Activated B cell treated with CpG ODN at 0.5 μM for 24 hours (primary cell): ENCODE measurements at regions of chr1 and their contacts with region 1.

Region 1: GRCh38 chr1:101025657-101026504 is at the start of gene DPH5:
- DNase-seq: peak; percentile 77
- ATAC-seq: peak; percentile 95
- H3K4me3 Mint-ChIP-seq: peak within 1 kb of the TSS; percentile 97
- H3K27ac Mint-ChIP-seq: peak within 1 kb of the TSS; percentile 98
- H3K4me1 Mint-ChIP-seq: peaks cover 66% of the 10 kb centered on the region
- H3K27me3 Mint-ChIP-seq: no peaks in the 10 kb centered on the region
- CTCF ChIP-seq: no peak
- total RNA-seq, gene DPH5: 45.2 and 51.9 TPM in 2 replicates

Region 2: DNA sequence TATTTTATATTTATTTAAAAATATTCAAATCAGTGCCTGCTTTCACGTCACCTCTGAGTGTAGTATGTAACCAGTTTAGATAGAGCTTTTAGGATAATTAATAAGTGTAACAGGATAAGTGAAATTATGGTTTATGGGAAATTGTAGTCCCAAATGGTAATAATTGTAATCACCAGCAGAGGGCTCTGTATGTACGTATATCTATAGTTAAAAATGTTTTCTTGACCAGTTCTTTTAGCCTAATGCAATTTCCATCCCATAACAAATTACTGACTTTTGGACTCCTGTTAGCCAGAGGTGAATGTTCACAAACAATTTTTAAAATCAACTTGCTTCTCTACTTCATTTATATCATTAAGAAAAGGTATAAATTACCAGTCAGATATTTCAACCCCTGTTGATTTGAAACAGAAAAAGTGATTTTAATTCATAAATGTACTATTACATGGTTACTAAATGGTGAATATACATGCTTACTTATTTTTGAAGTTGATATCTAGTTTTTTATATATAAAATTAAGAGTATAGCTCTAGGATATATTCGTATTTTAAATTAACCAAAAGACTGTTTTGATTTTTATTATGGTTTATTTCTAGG is 104.7 kb before region 1 on chr1:
- CTCF ChIA-PET with region 1: no interaction called
- POLR2A ChIA-PET with region 1: no interaction called
- intact Hi-C with region 1: loop called (anchors 5 kb)
- DNase-seq: no peak
- ATAC-seq: no peak
- H3K4me3 Mint-ChIP-seq: no peak overlapping the region
- H3K27ac Mint-ChIP-seq: no peak overlapping the region
- H3K4me1 Mint-ChIP-seq: peaks cover 24% of the 10 kb centered on the region
- H3K27me3 Mint-ChIP-seq: no peaks in the 10 kb centered on the region
- CTCF ChIP-seq: peak; percentile 98

Region 3: GRCh38 chr1:101039245-101039644 is 13.4 kb after region 1 on chr1:
- CTCF ChIA-PET with region 1: no interaction called
- POLR2A ChIA-PET with region 1: interaction called, 4 read pairs
- intact Hi-C with region 1: loop called (anchors 1 kb)
- DNase-seq: no peak
- ATAC-seq: no peak
- H3K4me3 Mint-ChIP-seq: no peak overlapping the region
- H3K27ac Mint-ChIP-seq: peak overlapping the region; percentile 64
- H3K4me1 Mint-ChIP-seq: peaks cover 56% of the 10 kb centered on the region
- H3K27me3 Mint-ChIP-seq: no peaks in the 10 kb centered on the region
- CTCF ChIP-seq: no peak

Region 4: DNA sequence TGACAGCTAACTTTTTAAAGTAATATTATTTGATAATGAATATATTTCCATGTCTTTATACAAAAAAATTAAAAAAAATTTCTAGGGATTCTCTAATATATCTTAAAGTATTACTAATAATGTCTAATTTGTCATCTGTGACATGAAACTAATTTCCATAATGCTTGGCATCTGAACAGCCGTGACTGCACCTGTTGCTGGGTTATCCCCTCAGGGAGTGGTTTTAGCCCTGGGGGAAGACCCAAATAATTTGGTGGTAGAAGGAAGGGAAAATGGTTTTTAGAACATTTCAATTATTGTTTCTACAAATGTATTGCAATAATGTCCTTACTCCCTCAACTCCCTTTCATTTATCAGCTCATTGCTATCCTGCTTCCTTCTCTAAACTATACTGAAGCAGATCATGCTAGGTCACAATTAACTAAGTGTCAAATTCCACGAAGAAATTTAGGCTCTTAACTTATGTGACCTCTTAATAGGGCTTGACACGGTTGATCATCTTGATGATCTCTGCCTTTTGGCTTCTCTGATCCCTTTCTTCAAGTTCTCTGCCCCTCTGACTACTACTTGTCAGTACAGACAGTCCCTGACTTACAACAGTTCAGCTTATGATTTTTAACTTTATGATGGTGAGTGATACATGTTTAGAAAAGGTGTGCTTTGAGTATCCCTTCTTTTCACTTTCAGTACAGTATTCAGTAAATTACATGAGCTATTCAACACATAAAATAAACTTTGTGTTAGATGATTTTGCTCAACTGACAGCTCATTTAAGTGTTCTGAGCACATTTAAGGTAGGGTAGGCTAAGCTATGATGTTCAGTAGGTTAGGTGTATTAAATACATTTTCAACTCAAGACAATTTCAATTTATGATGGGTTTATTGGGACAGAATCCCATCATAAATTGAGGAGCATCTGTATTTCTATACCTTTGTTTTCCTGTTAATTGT is 26.1 kb after region 1 on chr1:
- CTCF ChIA-PET with region 1: interaction called, 3 read pairs
- POLR2A ChIA-PET with region 1: interaction called, 20 read pairs
- intact Hi-C with region 1: loop called (anchors 1 kb)
- DNase-seq: peak; percentile 27
- ATAC-seq: peak; percentile 88
- H3K4me3 Mint-ChIP-seq: peak overlapping the region; percentile 78
- H3K27ac Mint-ChIP-seq: peak overlapping the region; percentile 95
- H3K4me1 Mint-ChIP-seq: peaks cover 70% of the 10 kb centered on the region
- H3K27me3 Mint-ChIP-seq: no peaks in the 10 kb centered on the region
- CTCF ChIP-seq: no peak

Region 5: DNA sequence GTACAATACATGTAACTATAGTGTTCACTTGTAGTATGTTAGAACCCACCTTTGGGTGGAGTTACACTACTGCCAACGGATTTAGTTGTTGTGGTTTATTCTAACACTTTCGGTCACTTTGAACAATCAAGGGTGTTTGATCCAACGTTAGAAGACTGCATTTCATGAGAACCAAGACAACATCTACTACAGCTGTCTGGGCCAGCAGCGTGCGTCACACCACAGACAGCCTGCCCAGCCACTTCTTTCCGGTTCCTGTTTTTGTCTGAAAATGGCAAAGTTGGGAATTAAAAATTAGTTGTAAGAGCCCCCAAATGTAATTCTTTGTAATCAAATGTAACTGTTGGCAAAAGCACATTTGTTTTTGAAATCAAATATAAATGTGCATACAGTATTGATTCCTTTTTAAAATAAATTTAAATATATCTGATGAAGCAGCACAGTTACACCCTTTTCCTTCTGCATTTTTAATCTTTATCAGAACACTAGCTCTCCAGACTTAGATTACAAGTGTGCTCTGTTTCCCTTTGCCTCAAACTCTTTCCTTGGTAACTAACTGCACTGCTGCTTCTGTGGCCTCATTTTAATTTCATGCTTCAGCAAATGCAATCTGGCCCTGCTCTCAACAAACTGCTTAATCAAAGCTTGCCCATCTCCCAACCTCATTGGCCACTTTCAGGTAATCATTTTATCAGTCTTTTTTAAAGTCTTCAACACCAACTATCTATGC is 86.3 kb after region 1 on chr1:
- CTCF ChIA-PET with region 1: no interaction called
- POLR2A ChIA-PET with region 1: interaction called, 5 read pairs
- intact Hi-C with region 1: loop called (anchors 5 kb)
- DNase-seq: peak; percentile 32
- ATAC-seq: peak; percentile 96
- H3K4me3 Mint-ChIP-seq: peak overlapping the region; percentile 57
- H3K27ac Mint-ChIP-seq: peak overlapping the region; percentile 93
- H3K4me1 Mint-ChIP-seq: peaks cover 40% of the 10 kb centered on the region
- H3K27me3 Mint-ChIP-seq: no peaks in the 10 kb centered on the region
- CTCF ChIP-seq: no peak

Region 6: GRCh38 chr1:101128211-101128727 is 102.4 kb after region 1 on chr1:
- CTCF ChIA-PET with region 1: no interaction called
- POLR2A ChIA-PET with region 1: no interaction called
- intact Hi-C with region 1: loop called (anchors 2 kb)
- DNase-seq: no peak
- ATAC-seq: peak; percentile 95
- H3K4me3 Mint-ChIP-seq: peak overlapping the region; percentile 55
- H3K27ac Mint-ChIP-seq: peak overlapping the region; percentile 87
- H3K4me1 Mint-ChIP-seq: peaks cover 62% of the 10 kb centered on the region
- H3K27me3 Mint-ChIP-seq: no peaks in the 10 kb centered on the region
- CTCF ChIP-seq: no peak

Region 7: DNA sequence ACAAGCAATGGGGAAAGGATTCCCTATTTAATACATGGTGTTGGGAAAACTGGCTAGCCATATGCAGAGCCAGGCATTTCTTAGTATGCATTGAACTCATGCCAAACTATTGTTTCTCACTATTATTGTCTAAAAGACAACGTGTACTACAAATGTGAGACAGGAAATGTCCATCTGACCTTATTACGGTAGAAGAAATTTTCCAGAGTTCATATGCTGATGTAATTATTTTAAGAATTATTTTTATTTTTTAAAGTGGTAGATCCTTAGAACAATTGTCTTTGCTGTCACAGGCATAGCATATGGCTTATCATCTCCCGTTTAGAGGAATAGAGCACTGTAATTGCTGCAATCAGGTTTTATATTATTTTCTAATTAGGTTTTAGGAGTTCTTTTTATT is 135.7 kb after region 1 on chr1:
- CTCF ChIA-PET with region 1: no interaction called
- POLR2A ChIA-PET with region 1: no interaction called
- intact Hi-C with region 1: no loop called
- DNase-seq: no peak
- ATAC-seq: no peak
- H3K4me3 Mint-ChIP-seq: no peak overlapping the region
- H3K27ac Mint-ChIP-seq: no peak overlapping the region
- H3K4me1 Mint-ChIP-seq: no peaks in the 10 kb centered on the region
- H3K27me3 Mint-ChIP-seq: no peaks in the 10 kb centered on the region
- CTCF ChIP-seq: no peak